Natural killer cell (primary cell): ENCODE measurements at regions of chr6 and their contacts with region 1.

Region 1: DNA sequence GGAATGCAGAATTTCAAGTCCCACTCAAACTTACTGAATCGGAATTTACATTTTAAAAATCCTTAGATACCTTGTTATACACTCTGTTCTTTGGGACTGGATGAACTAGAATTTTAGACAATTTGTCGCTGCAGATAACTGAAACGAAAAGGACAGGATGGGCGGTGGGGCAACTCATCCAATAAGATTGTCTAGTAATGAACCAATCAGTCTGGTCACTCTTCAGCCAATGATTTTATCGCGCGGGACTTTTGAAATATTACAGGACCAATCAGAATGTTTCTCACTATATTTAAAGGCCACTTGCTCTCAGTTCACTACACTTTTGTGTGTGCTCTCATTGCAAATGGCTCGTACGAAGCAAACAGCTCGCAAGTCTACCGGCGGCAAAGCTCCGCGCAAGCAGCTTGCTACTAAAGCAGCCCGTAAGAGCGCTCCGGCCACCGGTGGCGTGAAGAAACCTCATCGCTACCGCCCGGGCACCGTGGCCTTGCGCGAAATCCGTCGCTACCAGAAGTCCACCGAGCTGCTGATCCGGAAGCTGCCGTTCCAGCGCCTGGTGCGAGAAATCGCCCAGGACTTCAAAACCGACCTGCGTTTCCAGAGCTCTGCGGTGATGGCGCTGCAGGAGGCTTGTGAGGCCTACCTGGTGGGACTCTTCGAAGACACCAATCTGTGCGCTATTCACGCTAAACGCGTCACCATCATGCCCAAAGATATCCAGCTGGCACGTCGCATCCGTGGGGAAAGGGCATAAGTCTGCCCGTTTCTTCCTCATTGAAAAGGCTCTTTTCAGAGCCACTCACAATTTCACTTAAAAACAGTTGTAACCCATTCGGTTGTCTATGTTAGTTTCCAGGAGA is 41.9 kb upstream of the HFE start:
- DNase-seq: peak; percentile 64 to 92
- ATAC-seq: peak; percentile 52 to 73 (median 64)
- H3K4me3 ChIP-seq: peak overlapping the region; percentile 64
- H3K4me3 Mint-ChIP-seq: peak overlapping the region; percentile 95
- H3K27ac ChIP-seq: peak overlapping the region; percentile 91
- H3K27ac Mint-ChIP-seq: peak overlapping the region; percentile 97 to 98
- H3K4me1 ChIP-seq: peaks cover 26% of the 10 kb centered on the region
- H3K4me1 Mint-ChIP-seq: peaks cover 25 to 28% of the 10 kb centered on the region in 2 donors
- H3K27me3 ChIP-seq: no peaks in the 10 kb centered on the region
- H3K27me3 Mint-ChIP-seq: no peaks in the 10 kb centered on the region
- CTCF ChIP-seq: no peak

Region 2: GRCh38 chr6:26020329-26021000 is 24.8 kb before region 1 on chr6:
- intact Hi-C with region 1: loop called (anchors 1 kb)
- DNase-seq: peak; percentile 85 to 95
- ATAC-seq: peak; percentile 50 to 69 (median 54)
- H3K4me3 ChIP-seq: peak overlapping the region; percentile 77
- H3K4me3 Mint-ChIP-seq: peak overlapping the region; percentile 98
- H3K27ac ChIP-seq: peak overlapping the region; percentile 95
- H3K27ac Mint-ChIP-seq: peak overlapping the region; percentile 97 to 100
- H3K4me1 ChIP-seq: peaks cover 27% of the 10 kb centered on the region
- H3K4me1 Mint-ChIP-seq: peaks cover 36 to 41% of the 10 kb centered on the region in 2 donors
- H3K27me3 ChIP-seq: no peaks in the 10 kb centered on the region
- H3K27me3 Mint-ChIP-seq: no peaks in the 10 kb centered on the region
- CTCF ChIP-seq: no peak